Posterior cingulate gyrus (tissue), 11 donors: ENCODE measurements at regions of chr19 and their contacts with region 1.

Region 1: GRCh38 chr19:29528350-29528945 is 2.7 kb downstream of the VSTM2B start:
- DNase-seq: peak; percentile 73 to 98 (median 86)

Region 2: GRCh38 chr19:28737021-28737895 is 791.2 kb before region 1 on chr19:
- intact Hi-C with region 1: loop called (anchors 2 kb)
- DNase-seq: no peak

Region 3: DNA sequence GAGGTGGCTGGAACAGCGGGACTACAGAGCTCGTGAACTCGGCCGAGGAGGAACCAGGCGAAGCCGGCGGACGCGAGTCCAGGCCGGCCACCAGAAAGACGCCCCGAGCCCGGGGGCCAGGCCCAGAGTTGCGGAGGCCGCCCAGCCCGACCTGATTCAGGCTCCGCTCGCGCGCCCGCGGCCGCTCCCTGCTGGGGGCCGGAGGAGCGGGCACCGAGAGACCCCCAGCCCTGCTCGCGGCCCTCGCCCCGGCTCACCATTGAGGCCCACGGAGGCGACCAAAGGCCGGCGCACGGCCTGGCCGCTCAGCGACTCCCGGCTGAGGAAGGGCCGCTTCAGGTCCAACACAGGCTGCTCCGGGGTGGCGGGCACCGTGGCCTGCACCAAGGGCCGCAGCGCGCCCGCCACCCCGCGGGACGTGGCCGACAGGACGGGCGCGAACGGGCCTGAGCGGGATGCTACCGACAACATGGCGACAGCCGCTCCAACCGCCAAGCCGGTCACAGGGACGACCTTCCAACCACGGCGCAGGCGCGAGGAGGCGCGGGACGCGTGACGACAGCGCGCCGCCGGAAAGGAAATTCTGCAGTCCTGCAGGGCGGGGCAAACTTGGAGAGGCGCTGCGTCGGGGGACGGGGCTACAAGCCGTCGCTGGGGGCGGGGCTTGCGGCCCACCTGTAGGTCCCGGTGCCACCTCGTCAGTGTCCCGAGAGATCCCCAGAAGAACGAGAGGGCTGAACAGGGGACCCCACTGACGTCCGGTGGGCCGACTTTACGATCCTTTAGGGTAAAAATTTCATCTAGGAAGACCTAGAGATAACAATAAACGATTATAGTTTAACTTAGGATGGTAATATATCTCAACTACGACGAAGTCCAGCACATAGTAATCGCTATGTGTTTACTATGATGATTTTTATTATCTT is 315.5 kb before region 1 on chr19 and contains the start of gene UQCRFS1:
- intact Hi-C with region 1: loop called (anchors 5 kb)
- DNase-seq: peak; percentile 92 to 99 (median 95)

Region 4: DNA sequence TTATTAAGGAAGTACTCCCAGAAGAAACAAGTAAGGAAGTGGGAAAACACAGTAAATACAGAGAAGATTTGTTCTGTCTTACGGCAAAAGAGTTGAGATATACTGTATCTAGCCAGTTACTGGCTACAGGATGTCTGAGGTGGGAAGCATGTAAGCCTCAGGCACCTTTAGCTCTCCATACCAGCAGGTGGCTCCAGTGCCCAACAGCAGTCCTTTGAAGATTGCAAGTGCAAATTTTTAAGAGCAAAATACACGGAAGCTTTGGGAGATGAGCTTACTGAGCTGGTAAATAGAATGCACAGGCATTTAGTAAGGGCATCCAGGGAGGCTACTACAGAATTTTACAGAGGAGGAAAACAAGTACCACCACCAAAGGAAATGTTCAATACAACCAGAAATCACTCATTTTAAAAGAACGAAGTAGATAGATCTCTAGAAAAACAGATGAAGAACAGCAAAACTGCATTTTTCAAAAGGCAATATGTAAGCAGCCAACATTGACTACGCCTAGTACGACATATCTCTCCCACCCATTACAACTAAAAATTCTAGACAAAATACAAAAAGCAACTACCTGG is 60.5 kb before region 1 on chr19:
- intact Hi-C with region 1: loop called (anchors 5 kb)
- DNase-seq: peak in 5 of 10 donors; percentile 52 to 92 (median 61)